Activated B cell treated with CpG ODN at 0.5 μM for 24 hours (primary cell): ENCODE measurements at regions of chr9 and their contacts with region 1.

Region 1: GRCh38 chr9:96854073-96854876 is at the start of gene ZNF782:
- DNase-seq: peak; percentile 83
- ATAC-seq: peak; percentile 95
- H3K4me3 Mint-ChIP-seq: peak within 1 kb of the TSS; percentile 100
- H3K27ac Mint-ChIP-seq: peak within 1 kb of the TSS; percentile 98
- H3K4me1 Mint-ChIP-seq: peaks cover 40% of the 10 kb centered on the region
- H3K27me3 Mint-ChIP-seq: peaks cover 9% of the 10 kb centered on the region
- CTCF ChIP-seq: no peak
- total RNA-seq, gene ZNF782: 7.7 and 8.0 TPM in 2 replicates

Region 2: GRCh38 chr9:96449845-96450612 is 404.2 kb before region 1 on chr9 and contains the start of gene HABP4:
- CTCF ChIA-PET with region 1: no interaction called
- POLR2A ChIA-PET with region 1: no interaction called
- intact Hi-C with region 1: loop called (anchors 10 kb)
- DNase-seq: peak; percentile 97
- ATAC-seq: peak; percentile 96
- H3K4me3 Mint-ChIP-seq: peak within 1 kb of the TSS; percentile 87
- H3K27ac Mint-ChIP-seq: peak within 1 kb of the TSS; percentile 71
- H3K4me1 Mint-ChIP-seq: peaks cover 11% of the 10 kb centered on the region
- H3K27me3 Mint-ChIP-seq: peaks cover 3% of the 10 kb centered on the region
- CTCF ChIP-seq: no peak
- total RNA-seq, gene HABP4: 8.1 TPM in 2 replicates

Region 3: DNA sequence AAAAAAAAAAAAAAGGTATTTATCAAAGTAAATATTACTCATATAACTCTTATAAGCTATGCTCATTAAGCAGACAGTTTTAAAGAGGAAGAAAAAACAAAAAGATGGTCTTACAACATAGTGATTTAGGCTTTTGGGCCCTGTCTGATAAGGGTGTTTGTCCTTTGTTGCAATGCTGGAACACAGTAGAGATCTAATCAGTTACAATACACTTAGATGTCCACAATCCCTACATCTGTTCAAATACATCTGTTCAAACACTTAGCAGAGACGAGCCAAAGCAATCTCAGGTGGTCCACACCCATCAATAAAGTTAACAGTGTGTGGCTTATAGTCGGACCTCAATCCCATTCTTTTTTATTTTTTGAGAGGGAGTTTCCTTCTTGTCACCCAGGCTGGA is 210.1 kb before region 1 on chr9:
- CTCF ChIA-PET with region 1: no interaction called
- POLR2A ChIA-PET with region 1: no interaction called
- intact Hi-C with region 1: no loop called
- DNase-seq: no peak
- ATAC-seq: no peak
- H3K4me3 Mint-ChIP-seq: no peak overlapping the region
- H3K27ac Mint-ChIP-seq: no peak overlapping the region
- H3K4me1 Mint-ChIP-seq: peaks cover 5% of the 10 kb centered on the region
- H3K27me3 Mint-ChIP-seq: no peaks in the 10 kb centered on the region
- CTCF ChIP-seq: no peak

Region 4: DNA sequence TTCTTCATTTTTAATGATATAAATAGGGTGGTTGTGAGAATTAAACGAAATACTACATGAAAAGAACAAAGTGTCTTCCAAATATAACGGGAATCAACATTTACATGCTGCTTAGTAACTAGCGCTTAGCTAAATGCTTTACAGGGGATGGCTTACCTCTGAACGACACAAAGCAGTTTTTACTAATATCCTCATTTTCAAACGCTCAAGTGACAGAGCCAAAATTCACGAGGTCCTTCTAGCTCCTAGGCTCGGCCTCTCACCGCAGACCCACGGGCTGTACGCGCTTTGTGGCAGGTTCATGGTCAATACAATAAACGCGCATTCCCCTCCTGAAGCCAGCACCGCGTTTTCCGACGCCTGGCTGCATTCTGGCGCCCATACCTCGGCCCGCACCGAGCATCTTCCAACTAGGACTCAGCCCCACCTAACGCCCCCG is 76.8 kb before region 1 on chr9:
- CTCF ChIA-PET with region 1: no interaction called
- POLR2A ChIA-PET with region 1: interaction called, 4 read pairs
- intact Hi-C with region 1: loop called (anchors 1 kb)
- DNase-seq: no peak
- ATAC-seq: no peak
- H3K4me3 Mint-ChIP-seq: peak overlapping the region; percentile 99
- H3K27ac Mint-ChIP-seq: peak overlapping the region; percentile 96
- H3K4me1 Mint-ChIP-seq: peaks cover 25% of the 10 kb centered on the region
- H3K27me3 Mint-ChIP-seq: no peaks in the 10 kb centered on the region
- CTCF ChIP-seq: no peak

Region 5: GRCh38 chr9:97398999-97399758 is 544.9 kb after region 1 on chr9:
- CTCF ChIA-PET with region 1: interaction called, 54 read pairs
- POLR2A ChIA-PET with region 1: no interaction called
- intact Hi-C with region 1: loop called (anchors 1 kb)
- DNase-seq: peak; percentile 68
- ATAC-seq: peak; percentile 97
- H3K4me3 Mint-ChIP-seq: no peak overlapping the region
- H3K27ac Mint-ChIP-seq: no peak overlapping the region
- H3K4me1 Mint-ChIP-seq: peaks cover 5% of the 10 kb centered on the region
- H3K27me3 Mint-ChIP-seq: peaks cover 4% of the 10 kb centered on the region
- CTCF ChIP-seq: no peak

Region 6: DNA sequence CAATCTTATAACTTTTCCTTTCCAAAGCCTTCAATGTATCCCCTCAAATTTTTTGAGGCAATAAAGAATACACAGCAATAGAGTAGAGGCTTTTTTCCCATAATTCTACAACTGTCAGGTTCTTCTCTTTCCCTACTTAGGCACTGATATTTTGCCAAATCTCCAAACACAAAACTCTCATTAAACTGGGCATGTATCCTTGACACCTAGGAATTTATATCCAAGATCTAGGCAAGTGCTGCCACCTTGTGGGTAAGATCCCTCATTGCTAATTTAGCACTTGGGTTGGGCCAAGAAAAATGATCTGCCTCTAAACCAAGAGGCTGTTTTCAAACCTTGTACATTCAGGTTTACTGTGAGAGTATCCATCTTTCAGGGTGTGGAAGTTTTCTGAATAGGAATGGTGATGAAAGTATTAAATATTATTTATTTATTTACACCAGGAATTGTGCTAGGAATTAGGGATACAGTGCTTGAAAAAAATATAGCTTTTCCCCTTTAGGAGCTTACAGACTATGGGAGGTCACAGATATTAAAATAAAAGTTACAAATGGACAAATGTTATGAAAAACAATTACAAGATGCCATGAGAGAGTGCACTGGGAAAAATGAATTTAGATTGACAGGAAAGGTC is 761.3 kb after region 1 on chr9:
- CTCF ChIA-PET with region 1: interaction called, 33 read pairs
- POLR2A ChIA-PET with region 1: no interaction called
- intact Hi-C with region 1: loop called (anchors 1 kb)
- DNase-seq: no peak
- ATAC-seq: peak; percentile 52
- H3K4me3 Mint-ChIP-seq: no peak overlapping the region
- H3K27ac Mint-ChIP-seq: no peak overlapping the region
- H3K4me1 Mint-ChIP-seq: peaks cover 12% of the 10 kb centered on the region
- H3K27me3 Mint-ChIP-seq: no peaks in the 10 kb centered on the region
- CTCF ChIP-seq: peak; percentile 77